ENCODE measurements at regions of chr4 and their contacts with region 1.

Region 1: DNA sequence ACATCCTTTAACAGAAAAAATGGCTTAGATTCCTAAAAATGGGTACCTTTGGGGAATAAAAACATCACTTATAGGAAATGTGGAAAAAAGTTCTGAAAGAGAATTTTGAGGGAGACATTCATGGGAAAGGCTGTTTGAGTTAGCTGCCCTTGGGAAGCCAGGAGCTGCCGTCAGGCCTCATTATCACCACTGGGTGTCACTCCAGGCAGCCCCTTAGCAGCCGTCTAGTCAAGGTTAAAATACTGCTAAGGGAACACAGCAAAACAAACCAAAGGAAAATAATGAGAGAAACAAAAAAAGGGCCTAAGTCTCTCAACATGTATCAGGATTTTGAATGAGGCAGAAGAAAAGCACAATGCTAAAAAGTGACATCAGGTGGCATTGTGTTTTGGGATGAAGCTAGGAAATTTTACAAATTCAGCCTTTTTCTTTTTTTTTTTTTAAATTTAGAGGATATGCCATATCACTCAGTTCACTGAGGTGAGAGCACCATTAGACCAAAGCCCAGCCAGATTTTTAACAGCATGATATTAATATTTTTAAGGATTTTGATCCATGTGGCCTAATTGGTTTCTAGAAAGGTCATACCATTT is 235.3 kb downstream of the GPAT3 start:
- DNase-seq: peak; percentile 28
- H3K4me3 Mint-ChIP-seq: no peak overlapping the region
- H3K27ac Mint-ChIP-seq: no peak overlapping the region
- H3K4me1 Mint-ChIP-seq: no peaks in the 10 kb centered on the region
- H3K27me3 Mint-ChIP-seq: peaks cover 11% of the 10 kb centered on the region

Region 2: GRCh38 chr4:81881855-81882621 is 1889.2 kb before region 1 on chr4:
- CTCF ChIA-PET with region 1: no interaction called
- intact Hi-C with region 1: no loop called
- DNase-seq: no peak
- H3K4me3 Mint-ChIP-seq: no peak overlapping the region
- H3K27ac Mint-ChIP-seq: no peak overlapping the region
- H3K4me1 Mint-ChIP-seq: peaks cover 5% of the 10 kb centered on the region
- H3K27me3 Mint-ChIP-seq: peaks cover 9% of the 10 kb centered on the region

Region 3: GRCh38 chr4:83677656-83678055 is 93.6 kb before region 1 on chr4:
- CTCF ChIA-PET with region 1: no interaction called
- intact Hi-C with region 1: no loop called
- DNase-seq: no peak
- H3K4me3 Mint-ChIP-seq: no peak overlapping the region
- H3K27ac Mint-ChIP-seq: no peak overlapping the region
- H3K4me1 Mint-ChIP-seq: no peaks in the 10 kb centered on the region
- H3K27me3 Mint-ChIP-seq: peaks cover 9% of the 10 kb centered on the region

Region 4: GRCh38 chr4:83837614-83838308 is 66.6 kb after region 1 on chr4:
- CTCF ChIA-PET with region 1: no interaction called
- intact Hi-C with region 1: no loop called
- DNase-seq: no peak
- H3K4me3 Mint-ChIP-seq: no peak overlapping the region
- H3K27ac Mint-ChIP-seq: no peak overlapping the region
- H3K4me1 Mint-ChIP-seq: no peaks in the 10 kb centered on the region
- H3K27me3 Mint-ChIP-seq: no peaks in the 10 kb centered on the region

Region 5: DNA sequence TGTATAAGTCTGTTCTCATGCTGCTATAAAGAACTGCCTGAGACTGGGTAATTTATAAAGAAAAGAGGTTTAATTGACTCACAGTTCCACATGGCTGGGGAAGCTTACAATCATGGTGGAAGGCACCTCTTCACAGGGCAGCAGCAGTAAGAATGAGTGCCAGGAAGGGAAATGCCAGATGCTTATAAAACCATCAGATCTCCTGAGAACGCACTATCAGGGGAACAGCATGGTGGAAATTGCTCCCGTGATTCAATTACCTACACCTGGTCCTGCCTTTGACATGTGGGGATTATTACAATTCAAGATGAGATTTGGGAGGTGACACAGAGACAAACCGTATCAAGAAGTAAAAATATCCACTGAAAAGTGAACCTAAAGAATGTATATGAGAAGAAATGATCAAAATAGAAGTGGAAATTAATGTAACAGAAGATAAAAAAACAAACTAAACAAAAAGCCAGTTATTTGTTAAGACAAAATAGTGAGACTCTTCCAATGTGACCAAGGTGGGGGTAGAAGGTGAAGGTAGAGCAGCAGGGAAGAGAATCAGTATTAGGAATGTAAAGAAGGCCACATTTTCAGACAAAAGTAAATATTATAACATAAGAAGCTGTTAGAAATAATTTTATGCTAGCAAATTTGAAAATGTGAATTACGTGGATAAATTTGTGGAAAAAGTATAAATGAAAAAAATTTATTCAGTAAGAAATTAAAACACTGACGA is 355.0 kb after region 1 on chr4:
- CTCF ChIA-PET with region 1: no interaction called
- intact Hi-C with region 1: no loop called
- DNase-seq: no peak
- H3K4me3 Mint-ChIP-seq: no peak overlapping the region
- H3K27ac Mint-ChIP-seq: no peak overlapping the region
- H3K4me1 Mint-ChIP-seq: no peaks in the 10 kb centered on the region
- H3K27me3 Mint-ChIP-seq: no peaks in the 10 kb centered on the region

Region 6: DNA sequence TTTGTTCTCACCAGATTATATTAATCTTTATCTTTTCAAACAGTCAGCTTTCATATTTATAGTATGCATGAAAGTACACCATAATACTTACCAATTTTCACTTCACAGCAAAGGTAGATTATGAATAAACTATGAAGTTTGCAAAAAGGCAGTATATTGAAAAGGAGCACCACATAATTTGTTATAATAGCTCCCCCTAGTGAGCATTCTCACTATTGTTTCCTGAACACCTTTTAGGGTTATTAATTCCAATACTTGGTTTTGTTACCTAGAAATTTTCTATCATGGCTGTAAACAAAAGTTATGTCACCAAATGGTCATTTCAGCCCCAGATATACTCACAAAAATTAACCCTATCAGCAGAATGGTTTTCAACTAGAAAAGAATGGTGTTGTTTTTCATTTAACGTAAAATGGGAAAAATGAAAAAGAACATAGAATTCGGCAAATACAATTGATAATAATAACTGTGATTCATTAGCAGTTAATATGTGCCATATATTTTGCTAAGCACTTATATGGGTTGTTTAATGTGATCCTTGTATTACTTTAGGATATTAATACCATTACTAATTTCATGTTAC is 758.1 kb after region 1 on chr4:
- CTCF ChIA-PET with region 1: no interaction called
- intact Hi-C with region 1: loop called (anchors 5 kb)
- DNase-seq: no peak
- H3K4me3 Mint-ChIP-seq: no peak overlapping the region
- H3K27ac Mint-ChIP-seq: no peak overlapping the region
- H3K4me1 Mint-ChIP-seq: no peaks in the 10 kb centered on the region
- H3K27me3 Mint-ChIP-seq: peaks cover 16% of the 10 kb centered on the region

Measured in activated naive CD4-positive, alpha-beta T cell treated with anti-CD3 and anti-CD28 coated beads for 36 hours (primary cell).